GM12878 (cell line): ENCODE measurements at regions of chr20 and their contacts with region 1.

Region 1: DNA sequence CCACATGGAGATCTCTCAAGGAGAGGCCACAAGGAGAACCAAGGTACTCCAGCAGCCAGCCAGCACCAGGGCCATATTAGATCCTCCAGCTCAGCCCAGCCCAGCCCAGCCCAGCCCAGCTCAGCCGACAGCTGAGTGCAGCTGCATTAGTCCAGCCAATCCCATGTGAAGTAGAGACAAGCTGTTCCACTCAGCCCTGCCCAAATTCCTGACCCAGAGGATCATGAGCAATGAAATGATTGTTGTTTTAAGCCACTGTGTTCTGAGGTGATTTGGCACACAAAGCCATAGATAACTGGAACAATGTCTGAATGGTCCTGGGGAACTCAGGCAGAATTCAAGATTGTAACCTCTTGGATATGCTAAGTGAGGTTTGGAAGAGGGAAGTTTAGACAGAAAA is 59.5 kb upstream of the BMP2 start:
- DNase-seq: no peak
- ATAC-seq: peak; percentile 8; the same call in 2 of the 3 replicates
- H3K4me3 ChIP-seq: no peak overlapping the region
- H3K27ac ChIP-seq: no peak overlapping the region
- H3K4me1 ChIP-seq: no peaks in the 10 kb centered on the region
- H3K27me3 ChIP-seq: no peaks in the 10 kb centered on the region
- CTCF ChIP-seq: no peak
- EP300 ChIP-seq: no peak
- POLR2A ChIP-seq: no peak
- RAD21 ChIP-seq: no peak

Region 2: GRCh38 chr20:6692568-6693173 is 15.3 kb before region 1 on chr20:
- CTCF ChIA-PET with region 1: interaction called, 5 read pairs
- POLR2A ChIA-PET with region 1: interaction called, 4 read pairs
- RAD21 ChIA-PET with region 1: interaction called, 3 read pairs
- SMC1A ChIA-PET with region 1: interaction called, 29 read pairs
- in situ Hi-C with region 1: no loop called
- intact Hi-C with region 1: no loop called
- DNase-seq: no peak
- ATAC-seq: peak; percentile 91
- H3K4me3 ChIP-seq: no peak overlapping the region
- H3K27ac ChIP-seq: no peak overlapping the region
- H3K4me1 ChIP-seq: no peaks in the 10 kb centered on the region
- H3K27me3 ChIP-seq: no peaks in the 10 kb centered on the region
- CTCF ChIP-seq: no peak; a peak in 1 of 6 replicates
- EP300 ChIP-seq: no peak
- POLR2A ChIP-seq: no peak
- RAD21 ChIP-seq: no peak

Region 3: GRCh38 chr20:6718651-6719368 is 10.8 kb after region 1 on chr20:
- CTCF ChIA-PET with region 1: interaction called, 7 read pairs
- POLR2A ChIA-PET with region 1: no interaction called
- RAD21 ChIA-PET with region 1: interaction called, 3 read pairs
- SMC1A ChIA-PET with region 1: interaction called, 32 read pairs
- in situ Hi-C with region 1: no loop called
- intact Hi-C with region 1: no loop called
- DNase-seq: no peak
- ATAC-seq: peak; percentile 63
- H3K4me3 ChIP-seq: no peak overlapping the region
- H3K27ac ChIP-seq: no peak overlapping the region
- H3K4me1 ChIP-seq: no peaks in the 10 kb centered on the region
- H3K27me3 ChIP-seq: no peaks in the 10 kb centered on the region
- CTCF ChIP-seq: no peak
- EP300 ChIP-seq: no peak
- POLR2A ChIP-seq: no peak
- RAD21 ChIP-seq: no peak

Region 4: DNA sequence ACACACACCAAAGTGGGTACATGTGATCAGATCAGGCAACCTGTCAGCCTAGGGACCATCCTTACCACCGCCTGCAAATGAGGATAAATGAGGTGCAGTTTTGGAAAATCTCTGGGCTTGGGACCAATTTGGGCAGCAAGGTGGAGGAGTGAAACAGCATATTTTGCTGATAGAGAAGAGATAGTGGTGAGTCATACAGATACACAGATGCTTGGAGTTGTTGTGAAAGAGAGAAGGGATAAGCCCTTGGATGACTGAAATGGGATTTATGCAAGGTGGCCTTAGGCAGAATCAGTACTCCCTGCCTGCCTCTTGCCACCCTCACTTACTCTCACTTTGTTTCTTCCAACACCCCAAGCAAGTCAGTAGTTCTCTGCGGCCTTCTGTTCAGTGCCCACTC is 94.2 kb after region 1 on chr20:
- CTCF ChIA-PET with region 1: no interaction called
- POLR2A ChIA-PET with region 1: no interaction called
- RAD21 ChIA-PET with region 1: no interaction called
- SMC1A ChIA-PET with region 1: no interaction called
- in situ Hi-C with region 1: no loop called
- intact Hi-C with region 1: no loop called
- DNase-seq: no peak
- ATAC-seq: no peak
- H3K4me3 ChIP-seq: no peak overlapping the region
- H3K27ac ChIP-seq: no peak overlapping the region
- H3K4me1 ChIP-seq: no peaks in the 10 kb centered on the region
- H3K27me3 ChIP-seq: no peaks in the 10 kb centered on the region
- CTCF ChIP-seq: no peak
- EP300 ChIP-seq: no peak
- POLR2A ChIP-seq: no peak
- RAD21 ChIP-seq: no peak

Region 5: DNA sequence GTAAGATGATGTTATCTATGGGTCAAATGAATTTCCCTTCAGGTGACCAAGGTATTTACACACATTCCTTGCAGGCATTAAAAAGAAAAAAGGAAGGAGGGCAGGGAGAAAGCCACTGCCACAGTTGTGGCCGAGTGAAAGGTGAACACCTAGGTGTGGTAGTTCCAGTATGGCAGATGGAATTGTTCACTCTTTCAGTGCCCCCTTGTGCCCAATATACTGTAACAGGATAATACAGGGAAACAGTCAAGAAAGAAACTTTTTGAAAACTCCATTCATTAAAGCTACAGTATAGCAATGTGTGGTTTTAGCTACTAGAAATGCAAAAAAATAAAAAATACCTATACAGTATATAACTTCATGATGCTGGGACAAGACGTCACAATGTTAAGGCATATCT is 111.6 kb after region 1 on chr20:
- CTCF ChIA-PET with region 1: no interaction called
- POLR2A ChIA-PET with region 1: no interaction called
- RAD21 ChIA-PET with region 1: no interaction called
- SMC1A ChIA-PET with region 1: no interaction called
- in situ Hi-C with region 1: no loop called
- intact Hi-C with region 1: no loop called
- DNase-seq: no peak
- ATAC-seq: peak; percentile 84
- H3K4me3 ChIP-seq: no peak overlapping the region
- H3K27ac ChIP-seq: no peak overlapping the region
- H3K4me1 ChIP-seq: no peaks in the 10 kb centered on the region
- H3K27me3 ChIP-seq: no peaks in the 10 kb centered on the region
- CTCF ChIP-seq: no peak; a peak in 1 of 6 replicates
- EP300 ChIP-seq: no peak
- POLR2A ChIP-seq: no peak
- RAD21 ChIP-seq: no peak